Activated naive CD4-positive, alpha-beta T cell treated with anti-CD3 and anti-CD28 coated beads for 36 hours (primary cell): ENCODE measurements at regions of chr1 and their contacts with region 1.

Region 1: GRCh38 chr1:225896937-225897549 is 8.1 kb upstream of the LEFTY1 start:
- DNase-seq: peak; percentile 87
- H3K4me3 Mint-ChIP-seq: peak overlapping the region; percentile 54
- H3K27ac Mint-ChIP-seq: peak overlapping the region; percentile 92
- H3K4me1 Mint-ChIP-seq: peaks cover 41% of the 10 kb centered on the region
- H3K27me3 Mint-ChIP-seq: no peaks in the 10 kb centered on the region

Region 2: GRCh38 chr1:224623743-224624333 is 1273.2 kb before region 1 on chr1:
- CTCF ChIA-PET with region 1: no interaction called
- intact Hi-C with region 1: loop called (anchors 5 kb)
- DNase-seq: peak; percentile 92
- H3K4me3 Mint-ChIP-seq: peak overlapping the region; percentile 46
- H3K27ac Mint-ChIP-seq: peak overlapping the region; percentile 82
- H3K4me1 Mint-ChIP-seq: peaks cover 23% of the 10 kb centered on the region
- H3K27me3 Mint-ChIP-seq: peaks cover 25% of the 10 kb centered on the region

Region 3: DNA sequence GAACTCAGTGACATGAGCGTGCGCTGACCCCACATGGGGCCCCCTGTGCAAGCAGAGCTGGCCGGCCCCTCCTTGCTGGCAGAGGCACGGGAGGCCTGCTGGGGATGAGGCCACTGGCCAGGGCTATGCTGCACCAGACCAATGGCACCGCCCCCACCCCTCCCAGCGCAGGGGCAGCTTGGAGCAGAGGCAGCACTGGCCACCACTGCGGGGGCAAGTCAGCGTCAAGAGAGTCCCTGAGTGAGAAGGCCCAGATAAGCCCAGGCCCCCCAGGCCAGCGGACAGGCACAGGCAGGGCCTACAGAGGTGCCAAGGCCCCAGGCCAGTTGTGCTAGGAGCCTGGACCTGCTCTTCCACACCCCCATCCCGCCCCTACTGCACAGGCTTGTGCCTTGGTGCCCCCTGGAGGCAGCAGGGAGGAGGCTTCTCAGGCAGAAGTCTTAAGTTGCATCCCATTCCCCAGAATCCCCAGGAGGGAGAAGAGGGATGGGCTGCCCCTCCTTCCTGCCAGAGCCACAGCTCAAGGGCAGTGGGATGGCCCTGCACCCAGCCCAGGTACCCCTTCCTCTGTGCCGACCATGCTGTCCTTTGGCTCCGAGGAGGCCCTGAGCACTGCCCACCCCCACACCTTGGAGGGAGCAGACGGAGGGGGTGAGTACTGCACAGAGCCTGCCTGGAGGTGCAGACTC is 51.3 kb before region 1 on chr1:
- CTCF ChIA-PET with region 1: no interaction called
- intact Hi-C with region 1: loop called (anchors 5 kb)
- DNase-seq: peak; percentile 49
- H3K4me3 Mint-ChIP-seq: no peak overlapping the region
- H3K27ac Mint-ChIP-seq: no peak overlapping the region
- H3K4me1 Mint-ChIP-seq: peaks cover 36% of the 10 kb centered on the region
- H3K27me3 Mint-ChIP-seq: no peaks in the 10 kb centered on the region

Region 4: DNA sequence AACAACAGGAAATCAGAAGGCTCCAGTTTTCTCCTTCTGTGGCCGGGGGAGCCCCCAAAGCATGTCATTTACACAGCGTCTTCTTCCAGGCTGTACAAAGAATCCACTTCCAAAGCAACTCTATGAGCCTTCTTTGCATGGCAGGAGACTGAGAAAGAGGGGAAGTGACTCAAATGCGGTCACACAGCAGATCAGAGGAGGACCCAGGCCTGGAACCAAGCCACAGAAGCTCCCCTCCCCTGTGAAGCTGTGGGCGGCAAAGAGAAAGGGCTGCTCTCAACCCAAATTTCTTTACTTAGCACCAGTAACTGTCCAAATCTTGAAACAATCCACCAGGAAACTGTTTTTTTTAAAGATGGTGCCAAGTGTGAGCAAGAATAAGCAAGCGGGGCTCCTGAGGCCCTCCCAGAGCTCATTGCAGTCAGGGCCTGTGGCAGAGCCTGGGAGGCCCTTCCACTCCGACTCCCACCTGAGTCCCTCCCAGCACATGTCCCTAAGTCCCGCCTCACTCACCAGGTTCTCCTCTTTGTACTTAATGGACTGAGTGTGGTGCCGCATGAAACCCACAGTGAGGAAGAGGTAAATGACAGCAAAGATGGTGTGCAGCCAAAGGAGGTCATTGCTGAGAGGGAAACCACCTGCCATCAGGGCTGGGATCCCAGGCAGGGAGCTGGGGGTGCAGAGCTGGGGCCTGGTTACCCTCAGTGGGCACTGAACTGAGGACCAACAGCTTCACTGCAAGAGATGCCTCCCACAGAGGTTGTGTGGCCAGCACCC is 30.8 kb before region 1 on chr1:
- CTCF ChIA-PET with region 1: interaction called, 3 read pairs
- intact Hi-C with region 1: loop called (anchors 1 kb)
- DNase-seq: peak; percentile 90
- H3K4me3 Mint-ChIP-seq: peak overlapping the region; percentile 4
- H3K27ac Mint-ChIP-seq: peak overlapping the region; percentile 79
- H3K4me1 Mint-ChIP-seq: peaks cover 43% of the 10 kb centered on the region
- H3K27me3 Mint-ChIP-seq: no peaks in the 10 kb centered on the region

Region 5: GRCh38 chr1:225923692-225924555 is 26.9 kb after region 1 on chr1 and contains the start of gene PYCR2:
- CTCF ChIA-PET with region 1: no interaction called
- intact Hi-C with region 1: loop called (anchors 1 kb)
- DNase-seq: peak; percentile 96
- H3K4me3 Mint-ChIP-seq: peak within 1 kb of the TSS; percentile 95
- H3K27ac Mint-ChIP-seq: peak within 1 kb of the TSS; percentile 90
- H3K4me1 Mint-ChIP-seq: peaks cover 59% of the 10 kb centered on the region
- H3K27me3 Mint-ChIP-seq: no peaks in the 10 kb centered on the region
- total RNA-seq, gene PYCR2: 143 to 149 TPM

Region 6: DNA sequence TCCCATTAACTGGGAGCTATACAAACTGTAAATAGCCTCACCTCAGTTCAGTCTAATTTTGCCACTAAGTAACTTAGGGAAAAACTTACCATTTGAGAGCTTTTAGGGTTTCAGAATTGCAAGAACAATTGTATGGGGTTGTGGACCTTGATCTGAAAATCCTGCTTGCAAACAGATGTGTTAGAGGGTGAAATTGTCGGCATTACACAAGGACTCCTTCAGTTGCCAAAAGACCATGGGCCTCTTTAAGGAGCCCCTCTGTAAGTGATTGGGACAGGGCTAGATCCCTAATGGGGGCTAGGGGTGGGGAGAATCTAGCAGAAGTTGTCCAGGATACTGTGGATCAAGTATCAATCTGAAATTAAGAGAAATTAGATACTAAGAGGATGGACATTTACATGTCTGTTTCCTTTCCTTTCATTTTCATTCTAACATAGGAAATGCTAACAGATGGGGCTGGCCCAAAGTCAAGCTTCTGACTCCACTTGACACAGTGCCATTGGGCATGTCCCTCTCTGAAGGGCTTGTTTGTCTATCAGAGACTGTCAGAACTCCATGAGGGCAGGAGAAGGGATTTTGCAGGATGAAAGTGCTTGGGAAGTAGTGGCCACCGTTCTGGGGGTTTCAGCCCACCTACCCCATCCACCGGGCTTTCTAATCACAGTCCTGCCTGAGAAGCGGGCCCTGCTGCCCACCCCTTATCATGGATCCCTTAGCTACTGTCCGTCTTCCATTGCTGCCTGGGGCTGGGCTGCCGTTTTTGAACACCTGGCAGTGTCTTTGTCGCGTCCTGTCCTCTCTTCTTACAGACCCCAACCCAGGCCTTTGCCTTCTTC is 706.2 kb after region 1 on chr1:
- CTCF ChIA-PET with region 1: no interaction called
- intact Hi-C with region 1: no loop called
- DNase-seq: peak; percentile 30
- H3K4me3 Mint-ChIP-seq: no peak overlapping the region
- H3K27ac Mint-ChIP-seq: no peak overlapping the region
- H3K4me1 Mint-ChIP-seq: no peaks in the 10 kb centered on the region
- H3K27me3 Mint-ChIP-seq: no peaks in the 10 kb centered on the region